Posterior vena cava (tissue), 2 donors: ENCODE measurements at regions of chr4 and their contacts with region 1.

Region 1: GRCh38 chr4:1249148-1249730 is 309 bp upstream of the CTBP1 start:
- DNase-seq: peak; percentile 96

Region 2: GRCh38 chr4:1289207-1290164 is 40.2 kb after region 1 on chr4 and contains the start of gene MAEA:
- intact Hi-C with region 1: loop called in 1 of 2 experiments (anchors 5 kb)
- DNase-seq: peak; percentile 99
- total RNA-seq, gene MAEA: 37.5 to 43.7 TPM

Region 3: GRCh38 chr4:1346781-1347409 is 97.7 kb after region 1 on chr4 and contains the start of gene UVSSA:
- intact Hi-C with region 1: loop called in 1 of 2 experiments (anchors 2 kb)
- DNase-seq: peak; percentile 100
- total RNA-seq, gene UVSSA: 14.3 to 14.7 TPM